PC-9 (cell line): ENCODE measurements at regions of chr1 and their contacts with region 1.

Region 1: GRCh38 chr1:153816283-153816889 is 41.2 kb downstream of the SLC27A3 start:
- DNase-seq: no peak
- H3K4me3 ChIP-seq: no peak overlapping the region
- H3K27ac ChIP-seq: no peak overlapping the region
- H3K4me1 ChIP-seq: no peaks in the 10 kb centered on the region
- H3K27me3 ChIP-seq: no peaks in the 10 kb centered on the region
- CTCF ChIP-seq: no peak

Region 2: DNA sequence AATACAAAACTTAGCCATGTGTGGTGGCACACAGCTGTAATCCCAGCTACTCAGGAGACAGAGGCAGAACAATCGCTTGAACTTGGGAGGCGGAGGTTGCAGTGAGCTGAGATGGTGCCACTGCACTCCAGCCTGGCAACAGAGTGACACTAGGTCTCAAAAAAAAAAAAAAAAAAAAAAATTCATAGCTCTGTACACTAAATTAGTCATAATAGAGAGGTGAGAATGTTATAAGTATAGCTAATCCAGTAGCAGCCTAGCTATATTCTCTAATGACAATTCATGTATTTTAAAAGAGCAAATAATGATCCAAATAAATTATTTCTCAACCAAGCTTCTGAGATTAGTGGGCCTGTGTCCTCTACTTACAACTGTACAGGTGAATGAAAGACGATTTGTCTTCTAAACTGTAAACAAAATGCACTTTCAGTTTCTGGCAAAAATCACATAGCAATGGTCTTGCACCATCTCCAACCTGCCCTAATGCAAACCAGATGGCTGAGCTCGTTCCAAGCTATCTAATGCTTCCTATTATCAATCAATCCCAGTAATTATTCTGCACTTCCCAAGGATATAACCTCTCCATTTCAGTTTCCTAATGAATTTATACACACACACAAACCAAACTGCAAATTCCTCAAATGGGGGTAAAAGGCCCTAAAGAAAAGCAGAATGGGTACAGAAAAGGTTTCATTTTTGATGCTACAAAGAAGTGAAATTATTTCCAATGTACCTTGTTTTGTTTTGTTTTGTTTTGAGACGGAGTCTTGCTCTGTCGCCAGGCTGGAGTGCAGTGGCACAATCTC is 49.9 kb after region 1 on chr1:
- CTCF ChIA-PET with region 1: interaction called, 10 read pairs
- POLR2A ChIA-PET with region 1: no interaction called
- intact Hi-C with region 1: no loop called
- DNase-seq: no peak
- H3K4me3 ChIP-seq: no peak overlapping the region
- H3K27ac ChIP-seq: no peak overlapping the region
- H3K4me1 ChIP-seq: no peaks in the 10 kb centered on the region
- H3K27me3 ChIP-seq: no peaks in the 10 kb centered on the region
- CTCF ChIP-seq: no peak

Region 3: DNA sequence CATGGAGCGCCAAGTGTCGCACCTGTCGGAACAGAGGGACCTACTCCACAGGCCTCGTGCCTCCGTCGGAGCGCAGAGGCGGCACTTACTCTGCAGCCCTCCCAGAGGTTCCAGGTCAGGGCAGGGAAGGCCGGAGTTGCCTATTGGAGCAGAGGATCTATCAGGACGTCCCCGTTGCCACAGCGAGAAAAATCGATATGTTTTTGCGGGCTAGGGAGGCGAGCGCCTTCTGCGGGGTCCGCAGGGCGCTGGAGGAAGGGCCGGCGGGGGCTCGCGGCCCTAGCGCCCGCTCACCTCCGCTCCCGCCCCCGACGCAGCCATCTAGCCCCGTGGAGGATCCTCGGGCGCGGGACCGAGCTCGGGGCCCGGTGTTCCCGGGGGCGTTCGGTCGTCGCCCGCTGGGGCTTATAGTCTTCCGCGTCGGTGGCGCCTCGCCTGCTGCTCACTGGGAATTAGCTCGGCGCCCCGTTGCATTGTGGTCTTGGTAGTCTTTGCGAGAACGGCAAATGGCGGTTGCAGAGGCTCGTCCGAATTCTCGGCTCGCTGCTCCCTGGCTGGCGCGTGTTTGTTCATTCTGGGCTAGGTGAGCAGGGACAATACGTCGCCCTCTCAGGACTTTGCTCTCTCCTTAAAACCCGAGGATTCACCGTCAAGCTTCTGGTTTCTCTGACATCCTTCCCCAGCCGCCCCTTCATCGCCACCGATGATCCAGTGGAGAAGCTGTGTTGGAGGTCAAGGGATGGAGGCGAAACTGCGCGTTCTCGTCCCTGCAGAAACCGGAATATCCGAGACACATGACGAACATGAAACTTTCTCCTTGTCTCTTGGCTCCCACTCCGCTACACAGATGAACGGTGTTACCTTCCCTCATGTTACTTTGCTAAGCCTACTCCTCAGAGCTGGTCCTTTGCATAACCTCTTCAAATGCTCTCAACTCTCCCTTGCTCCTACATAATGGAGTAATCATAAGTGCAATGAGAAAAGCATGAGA is 161.2 kb after region 1 on chr1 and contains the start of gene JTB:
- CTCF ChIA-PET with region 1: no interaction called
- POLR2A ChIA-PET with region 1: no interaction called
- intact Hi-C with region 1: loop called (anchors 2 kb)
- DNase-seq: peak; percentile 68 to 73
- H3K4me3 ChIP-seq: peak within 1 kb of the TSS; percentile 91
- H3K27ac ChIP-seq: peak within 1 kb of the TSS; percentile 58
- H3K4me1 ChIP-seq: peaks cover 15% of the 10 kb centered on the region; the same call in 1 of the 2 replicates
- H3K27me3 ChIP-seq: no peaks in the 10 kb centered on the region
- CTCF ChIP-seq: no peak
- total RNA-seq, gene JTB: 106 and 108 TPM in 2 replicates

Region 4: GRCh38 chr1:154129391-154129970 is 313.1 kb after region 1 on chr1:
- CTCF ChIA-PET with region 1: no interaction called
- POLR2A ChIA-PET with region 1: no interaction called
- intact Hi-C with region 1: no loop called
- DNase-seq: no peak
- H3K4me3 ChIP-seq: no peak overlapping the region
- H3K27ac ChIP-seq: no peak overlapping the region
- H3K4me1 ChIP-seq: no peaks in the 10 kb centered on the region
- H3K27me3 ChIP-seq: no peaks in the 10 kb centered on the region
- CTCF ChIP-seq: no peak

Region 5: GRCh38 chr1:154730259-154730658 is 913.9 kb after region 1 on chr1:
- CTCF ChIA-PET with region 1: no interaction called
- POLR2A ChIA-PET with region 1: no interaction called
- intact Hi-C with region 1: no loop called
- DNase-seq: peak; percentile 52 to 85
- H3K4me3 ChIP-seq: no peak overlapping the region
- H3K27ac ChIP-seq: peak overlapping the region; percentile 70
- H3K4me1 ChIP-seq: peaks cover 17% of the 10 kb centered on the region
- H3K27me3 ChIP-seq: no peaks in the 10 kb centered on the region
- CTCF ChIP-seq: no peak